CD14-positive monocyte (primary cell): ENCODE measurements at regions of chr4 and their contacts with region 1.

Region 1: DNA sequence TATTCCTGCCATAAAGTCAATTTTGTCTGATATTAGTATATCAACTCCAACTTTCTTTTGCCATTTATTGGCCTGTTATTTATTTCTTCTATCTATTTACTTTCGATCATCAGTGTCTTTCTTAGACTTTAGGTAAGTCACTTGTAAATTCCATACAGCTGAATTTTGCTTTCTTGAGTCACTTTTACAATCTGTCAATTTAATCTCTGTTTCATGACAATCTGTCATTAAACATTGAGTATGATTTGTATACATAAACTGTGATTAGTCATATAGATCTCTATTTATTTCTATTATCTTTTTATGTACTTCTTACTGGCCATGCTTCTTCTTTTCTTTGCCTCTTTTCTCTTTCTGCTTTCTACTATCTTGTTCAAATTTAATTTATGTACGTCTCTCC is 160.1 kb downstream of the TMA16 start:
- DNase-seq: no peak
- H3K4me3 ChIP-seq: no peak overlapping the region
- H3K4me3 Mint-ChIP-seq: no peak overlapping the region
- H3K27ac ChIP-seq: no peak overlapping the region
- H3K27ac Mint-ChIP-seq: no peak overlapping the region
- H3K4me1 ChIP-seq: peaks cover 10 to 12% of the 10 kb centered on the region in 2 donors
- H3K4me1 Mint-ChIP-seq: peaks cover 3% of the 10 kb centered on the region
- H3K27me3 ChIP-seq: no peaks in the 10 kb centered on the region
- H3K27me3 Mint-ChIP-seq: no peaks in the 10 kb centered on the region
- CTCF ChIP-seq: no peak

Region 2: DNA sequence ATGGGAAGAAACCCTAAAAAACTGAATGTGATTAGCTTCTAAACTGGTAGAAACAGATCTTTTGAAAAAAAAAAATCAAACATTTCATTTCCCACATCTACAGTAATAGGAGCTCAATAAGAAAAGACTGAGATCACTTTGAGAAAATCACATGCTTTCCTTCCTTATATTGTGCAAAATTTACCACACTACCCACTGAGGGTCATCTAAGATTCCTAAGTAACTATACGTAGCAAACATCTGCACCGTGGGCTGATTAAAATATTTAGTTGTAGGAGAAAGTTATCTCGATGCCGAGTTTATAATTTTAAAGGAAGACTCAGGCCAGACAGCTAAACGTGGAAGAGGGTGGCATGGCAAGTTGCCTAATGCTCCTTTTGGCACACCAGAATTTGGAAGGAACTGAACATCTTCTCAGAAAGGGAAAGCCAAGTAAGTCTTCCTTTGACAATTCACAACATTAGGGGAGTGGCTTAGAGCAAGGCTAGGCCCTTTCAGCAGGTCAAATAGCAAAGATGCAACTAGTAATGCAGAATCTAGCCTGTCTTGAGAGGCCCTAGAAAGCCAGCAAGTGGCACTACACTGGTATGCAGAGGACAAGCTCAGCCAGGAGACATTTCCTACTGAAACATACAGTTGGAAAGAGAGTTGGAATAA is 32.1 kb before region 1 on chr4:
- intact Hi-C with region 1: loop called in 1 of 2 experiments (anchors 5 kb)
- DNase-seq: peak in 2 of 3 donors; percentile 20 to 43
- H3K4me3 ChIP-seq: peak overlapping the region in 1 of 3 experiments; percentile 51
- H3K4me3 Mint-ChIP-seq: peak overlapping the region; percentile 38 to 63
- H3K27ac ChIP-seq: peak overlapping the region; percentile 87 to 92
- H3K27ac Mint-ChIP-seq: peak overlapping the region; percentile 89 to 97 (median 95)
- H3K4me1 ChIP-seq: peaks cover 34 to 40% of the 10 kb centered on the region in 2 donors
- H3K4me1 Mint-ChIP-seq: peaks cover 38% of the 10 kb centered on the region
- H3K27me3 ChIP-seq: no peaks in the 10 kb centered on the region
- H3K27me3 Mint-ChIP-seq: no peaks in the 10 kb centered on the region
- CTCF ChIP-seq: no peak

Region 3: GRCh38 chr4:164039482-164039881 is 384.9 kb after region 1 on chr4:
- intact Hi-C with region 1: no loop called
- DNase-seq: no peak
- H3K4me3 ChIP-seq: no peak overlapping the region
- H3K4me3 Mint-ChIP-seq: no peak overlapping the region
- H3K27ac ChIP-seq: no peak overlapping the region
- H3K27ac Mint-ChIP-seq: no peak overlapping the region
- H3K4me1 ChIP-seq: no peaks in the 10 kb centered on the region
- H3K4me1 Mint-ChIP-seq: no peaks in the 10 kb centered on the region
- H3K27me3 ChIP-seq: no peaks in the 10 kb centered on the region
- H3K27me3 Mint-ChIP-seq: peaks cover 0 to 2% (median 1%) of the 10 kb centered on the region in 3 donors
- CTCF ChIP-seq: no peak